Endothelial cell of umbilical vein (primary cell): ENCODE measurements at regions of chr12 and their contacts with region 1.

Region 1: GRCh38 chr12:10673660-10674384 is at the start of gene STYK1:
- DNase-seq: peak; percentile 75
- H3K4me3 ChIP-seq: peak within 1 kb of the TSS; percentile 49 to 82 (median 69)
- H3K27ac ChIP-seq: peak within 1 kb of the TSS; percentile 49
- H3K4me1 ChIP-seq: peaks cover 22% of the 10 kb centered on the region
- H3K27me3 ChIP-seq: no peaks in the 10 kb centered on the region
- CTCF ChIP-seq: peak; percentile 92 to 95
- POLR2A ChIP-seq: no peak
- total RNA-seq, gene STYK1: 14.6 and 15.2 TPM in 2 replicates

Region 2: GRCh38 chr12:10212201-10213131 is 461.4 kb before region 1 on chr12 and contains the start of gene GABARAPL1:
- CTCF ChIA-PET with region 1: no interaction called
- POLR2A ChIA-PET with region 1: no interaction called
- dilution Hi-C with region 1: no loop called
- intact Hi-C with region 1: loop called (anchors 5 kb)
- DNase-seq: peak; percentile 100
- H3K4me3 ChIP-seq: peak within 1 kb of the TSS; percentile 46 to 99 (median 93)
- H3K27ac ChIP-seq: peak within 1 kb of the TSS; percentile 96
- H3K4me1 ChIP-seq: peaks cover 11% of the 10 kb centered on the region
- H3K27me3 ChIP-seq: no peaks in the 10 kb centered on the region
- CTCF ChIP-seq: no peak
- POLR2A ChIP-seq: no peak
- total RNA-seq, gene GABARAPL1: 59.4 and 69.0 TPM in 2 replicates

Region 3: GRCh38 chr12:10331642-10332239 is 342.1 kb before region 1 on chr12:
- CTCF ChIA-PET with region 1: no interaction called
- POLR2A ChIA-PET with region 1: no interaction called
- dilution Hi-C with region 1: no loop called
- intact Hi-C with region 1: loop called (anchors 1 kb)
- DNase-seq: peak; percentile 62
- H3K4me3 ChIP-seq: no peak overlapping the region
- H3K27ac ChIP-seq: no peak overlapping the region
- H3K4me1 ChIP-seq: no peaks in the 10 kb centered on the region
- H3K27me3 ChIP-seq: no peaks in the 10 kb centered on the region
- CTCF ChIP-seq: peak; percentile 59 to 65
- POLR2A ChIP-seq: no peak

Region 4: GRCh38 chr12:10607885-10608458 is 65.8 kb before region 1 on chr12:
- CTCF ChIA-PET with region 1: interaction called, 10 read pairs
- POLR2A ChIA-PET with region 1: interaction called, 3 read pairs
- dilution Hi-C with region 1: no loop called
- intact Hi-C with region 1: loop called (anchors 1 kb)
- DNase-seq: peak; percentile 37
- H3K4me3 ChIP-seq: no peak overlapping the region
- H3K27ac ChIP-seq: no peak overlapping the region
- H3K4me1 ChIP-seq: peaks cover 10% of the 10 kb centered on the region
- H3K27me3 ChIP-seq: no peaks in the 10 kb centered on the region
- CTCF ChIP-seq: peak; percentile 15 to 31
- POLR2A ChIP-seq: no peak

Region 5: GRCh38 chr12:10641735-10642500 is 31.9 kb before region 1 on chr12:
- CTCF ChIA-PET with region 1: interaction called, 9 read pairs
- POLR2A ChIA-PET with region 1: interaction called, 3 read pairs
- dilution Hi-C with region 1: no loop called
- intact Hi-C with region 1: loop called (anchors 1 kb)
- DNase-seq: peak; percentile 99
- H3K4me3 ChIP-seq: peak overlapping the region in 1 of 3 experiments; percentile 43
- H3K27ac ChIP-seq: peak overlapping the region; percentile 98
- H3K4me1 ChIP-seq: peaks cover 48% of the 10 kb centered on the region
- H3K27me3 ChIP-seq: no peaks in the 10 kb centered on the region
- CTCF ChIP-seq: no peak
- POLR2A ChIP-seq: peak; percentile 95

Region 6: GRCh38 chr12:10838461-10838860 is 164.6 kb after region 1 on chr12:
- CTCF ChIA-PET with region 1: no interaction called
- POLR2A ChIA-PET with region 1: no interaction called
- dilution Hi-C with region 1: no loop called
- intact Hi-C with region 1: no loop called
- DNase-seq: no peak
- H3K4me3 ChIP-seq: no peak overlapping the region
- H3K27ac ChIP-seq: no peak overlapping the region
- H3K4me1 ChIP-seq: no peaks in the 10 kb centered on the region
- H3K27me3 ChIP-seq: no peaks in the 10 kb centered on the region
- CTCF ChIP-seq: no peak
- POLR2A ChIP-seq: no peak